ENCODE measurements at regions of chr4 and their contacts with region 1.

Region 1: GRCh38 chr4:142126890-142127497 is 490.6 kb downstream of the IL15 start:
- DNase-seq: peak; percentile 58
- H3K4me3 ChIP-seq: no peak overlapping the region
- H3K27ac ChIP-seq: no peak overlapping the region
- H3K4me1 ChIP-seq: peaks cover 9 to 34% (median 21%) of the 10 kb centered on the region in 4 donors
- H3K27me3 ChIP-seq: no peaks in the 10 kb centered on the region
- CTCF ChIP-seq: peak; percentile 76 to 83 (median 82)
- EP300 ChIP-seq: no peak
- POLR2A ChIP-seq: no peak

Region 2: DNA sequence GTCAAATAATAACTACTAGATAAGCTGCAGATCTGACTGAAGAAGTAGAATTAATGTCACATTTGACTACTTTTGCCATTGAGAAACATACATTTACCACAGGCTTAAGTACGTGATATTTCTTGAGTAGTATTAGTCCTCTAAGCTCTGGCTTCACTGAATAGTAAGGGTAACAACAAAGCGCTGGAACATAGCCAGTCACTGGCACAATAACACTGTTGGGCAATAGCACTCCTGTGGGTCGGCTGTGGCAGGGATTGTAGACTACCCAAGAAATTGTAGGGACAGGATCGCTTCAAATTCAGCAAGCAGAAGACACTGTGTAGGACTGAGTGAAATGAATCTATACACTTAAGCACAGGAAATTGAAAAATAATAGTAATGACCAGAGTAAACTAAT is 517.8 kb before region 1 on chr4:
- in situ Hi-C with region 1: no loop called
- intact Hi-C with region 1: no loop called
- DNase-seq: no peak
- H3K4me3 ChIP-seq: no peak overlapping the region
- H3K27ac ChIP-seq: no peak overlapping the region
- H3K4me1 ChIP-seq: no peaks in the 10 kb centered on the region
- H3K27me3 ChIP-seq: no peaks in the 10 kb centered on the region
- CTCF ChIP-seq: no peak
- EP300 ChIP-seq: no peak
- POLR2A ChIP-seq: no peak

Region 3: GRCh38 chr4:142719854-142720541 is 593.0 kb after region 1 on chr4:
- in situ Hi-C with region 1: loop called in 2 of 4 experiments (anchors 25 kb)
- intact Hi-C with region 1: no loop called
- DNase-seq: no peak
- H3K4me3 ChIP-seq: no peak overlapping the region
- H3K27ac ChIP-seq: no peak overlapping the region
- H3K4me1 ChIP-seq: no peaks in the 10 kb centered on the region
- H3K27me3 ChIP-seq: no peaks in the 10 kb centered on the region
- CTCF ChIP-seq: peak; percentile 27 to 44 (median 33)
- EP300 ChIP-seq: no peak
- POLR2A ChIP-seq: no peak

Region 4: DNA sequence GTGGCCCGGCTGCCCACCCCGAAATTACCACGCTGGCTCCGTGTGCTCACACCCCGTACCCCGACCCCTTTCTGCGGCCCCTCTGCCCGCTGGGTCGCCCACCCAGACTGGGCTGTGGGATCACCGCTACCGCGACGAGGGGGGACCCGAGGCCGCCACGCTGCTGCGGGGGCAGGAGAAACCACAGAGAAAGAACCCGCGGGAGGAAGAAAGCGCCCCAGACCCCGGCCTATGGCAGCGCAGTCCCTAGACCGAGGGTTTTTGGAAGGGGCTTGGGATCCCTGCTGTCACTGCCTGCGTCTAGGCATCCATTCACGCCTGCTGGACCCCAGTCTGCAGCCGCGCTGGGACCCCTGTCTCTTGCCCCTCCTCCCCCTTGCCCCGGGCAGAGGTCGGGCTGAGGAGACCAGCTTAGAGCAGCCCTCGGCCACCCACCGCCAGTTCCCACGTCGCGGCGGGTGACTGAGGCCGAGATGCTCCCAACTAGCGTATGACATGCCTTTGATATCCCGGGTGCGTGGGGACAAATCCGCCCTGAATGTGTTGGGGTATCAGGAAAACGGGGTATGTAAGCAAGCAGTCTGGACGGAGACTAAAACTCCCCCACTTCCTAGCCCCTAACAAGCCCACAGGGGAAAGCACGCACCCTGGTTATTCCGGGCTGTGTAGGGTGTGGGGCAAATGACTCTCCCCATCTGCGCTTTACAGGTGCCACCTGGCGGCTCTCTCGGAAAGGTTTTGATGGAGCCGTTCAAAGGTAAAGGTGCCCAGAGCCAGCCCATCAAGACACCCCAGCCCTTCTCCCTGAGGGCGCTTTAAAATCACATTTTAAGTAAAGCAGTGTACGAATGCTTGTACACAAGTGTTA is 720.0 kb after region 1 on chr4:
- in situ Hi-C with region 1: loop called in 3 of 4 experiments (anchors 10 kb)
- intact Hi-C with region 1: no loop called
- DNase-seq: peak; percentile 71
- H3K4me3 ChIP-seq: peak overlapping the region; percentile 7 to 61 (median 56)
- H3K27ac ChIP-seq: peak overlapping the region; percentile 53 to 67 (median 56)
- H3K4me1 ChIP-seq: peaks cover 3 to 18% (median 16%) of the 10 kb centered on the region in 4 donors
- H3K27me3 ChIP-seq: peaks cover 10% of the 10 kb centered on the region
- CTCF ChIP-seq: peak; percentile 18 to 55 (median 51)
- EP300 ChIP-seq: no peak
- POLR2A ChIP-seq: no peak